ENCODE measurements at regions of chr3 and their contacts with region 1.

Region 1: DNA sequence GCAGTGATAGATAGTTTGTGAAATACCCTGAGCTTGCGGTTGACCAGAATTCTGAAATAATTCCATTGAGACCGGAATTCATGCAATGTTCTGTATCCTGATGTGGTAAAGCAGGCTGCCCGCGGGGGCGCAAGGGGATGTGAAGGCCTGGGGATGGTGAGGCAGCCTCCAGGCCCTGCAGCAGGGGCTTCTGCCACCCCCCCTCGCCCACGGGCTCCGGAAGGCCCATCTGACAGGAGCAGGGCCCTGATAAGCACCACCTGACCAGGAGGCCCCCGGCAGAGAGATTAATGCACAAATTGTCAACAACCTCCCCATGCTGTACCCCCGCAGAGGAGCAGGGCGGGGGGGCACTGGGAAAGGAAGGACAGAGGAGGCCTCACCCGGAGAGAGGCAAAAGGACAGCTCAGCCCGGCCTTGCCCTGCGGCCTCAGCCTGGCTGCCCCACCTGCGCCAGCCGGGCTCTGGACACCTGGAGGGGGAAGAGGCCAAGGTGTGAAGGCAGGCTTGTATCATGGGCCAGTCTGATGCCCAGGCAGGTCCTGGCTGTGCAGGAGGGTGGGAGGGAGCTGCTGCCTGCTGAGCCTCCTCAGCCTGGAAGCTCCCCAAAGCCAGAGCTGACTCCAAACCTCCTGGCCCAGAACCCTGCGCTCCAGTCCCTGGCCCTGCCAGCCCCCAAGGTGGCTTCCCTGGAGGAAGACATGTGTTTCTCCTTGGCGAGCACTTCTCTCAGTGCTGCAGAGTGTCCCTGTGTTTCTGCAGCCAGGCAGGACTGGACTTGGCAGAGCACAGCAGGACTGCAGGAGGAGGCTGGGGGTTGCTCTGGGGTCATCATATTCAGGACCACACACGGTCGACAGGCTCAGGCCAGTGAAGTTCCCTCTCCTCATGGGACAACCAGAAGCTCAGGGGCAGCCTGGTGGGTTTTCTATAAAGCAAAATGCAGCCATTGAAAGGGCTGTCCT is 46.5 kb downstream of the RPN1 start:
- DNase-seq: no peak
- H3K4me3 ChIP-seq: no peak overlapping the region
- H3K27ac ChIP-seq: peak overlapping the region in 1 of 4 donors; percentile 9
- H3K4me1 ChIP-seq: peaks cover 3 to 19% (median 5%) of the 10 kb centered on the region in 3 donors
- H3K27me3 ChIP-seq: no peaks in the 10 kb centered on the region
- CTCF ChIP-seq: no peak
- POLR2A ChIP-seq: no peak

Region 2: DNA sequence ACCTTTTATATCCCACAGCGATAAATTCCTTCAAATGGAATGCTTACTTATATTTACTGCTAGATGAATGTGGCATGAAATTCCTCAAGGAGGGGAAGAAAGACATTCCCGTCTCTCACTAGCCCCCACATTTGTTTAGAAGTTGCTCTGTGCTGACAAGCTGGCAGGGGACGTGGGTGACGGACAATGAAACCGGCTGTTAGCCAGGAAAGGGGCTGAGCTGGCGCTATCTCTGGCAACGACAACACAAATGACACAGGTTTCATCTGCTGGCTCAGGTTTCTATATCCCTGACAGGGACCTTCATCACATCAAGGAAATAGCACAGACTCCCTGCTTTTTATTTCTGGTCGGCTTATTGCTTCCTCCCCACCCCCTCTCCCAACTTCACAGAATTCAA is 496.3 kb before region 1 on chr3:
- intact Hi-C with region 1: loop called (anchors 10 kb)
- DNase-seq: no peak
- H3K4me3 ChIP-seq: no peak overlapping the region
- H3K27ac ChIP-seq: no peak overlapping the region
- H3K4me1 ChIP-seq: peaks cover 0 to 10% (median 0%) of the 10 kb centered on the region in 3 donors
- H3K27me3 ChIP-seq: no peaks in the 10 kb centered on the region
- CTCF ChIP-seq: no peak
- POLR2A ChIP-seq: no peak

Region 3: DNA sequence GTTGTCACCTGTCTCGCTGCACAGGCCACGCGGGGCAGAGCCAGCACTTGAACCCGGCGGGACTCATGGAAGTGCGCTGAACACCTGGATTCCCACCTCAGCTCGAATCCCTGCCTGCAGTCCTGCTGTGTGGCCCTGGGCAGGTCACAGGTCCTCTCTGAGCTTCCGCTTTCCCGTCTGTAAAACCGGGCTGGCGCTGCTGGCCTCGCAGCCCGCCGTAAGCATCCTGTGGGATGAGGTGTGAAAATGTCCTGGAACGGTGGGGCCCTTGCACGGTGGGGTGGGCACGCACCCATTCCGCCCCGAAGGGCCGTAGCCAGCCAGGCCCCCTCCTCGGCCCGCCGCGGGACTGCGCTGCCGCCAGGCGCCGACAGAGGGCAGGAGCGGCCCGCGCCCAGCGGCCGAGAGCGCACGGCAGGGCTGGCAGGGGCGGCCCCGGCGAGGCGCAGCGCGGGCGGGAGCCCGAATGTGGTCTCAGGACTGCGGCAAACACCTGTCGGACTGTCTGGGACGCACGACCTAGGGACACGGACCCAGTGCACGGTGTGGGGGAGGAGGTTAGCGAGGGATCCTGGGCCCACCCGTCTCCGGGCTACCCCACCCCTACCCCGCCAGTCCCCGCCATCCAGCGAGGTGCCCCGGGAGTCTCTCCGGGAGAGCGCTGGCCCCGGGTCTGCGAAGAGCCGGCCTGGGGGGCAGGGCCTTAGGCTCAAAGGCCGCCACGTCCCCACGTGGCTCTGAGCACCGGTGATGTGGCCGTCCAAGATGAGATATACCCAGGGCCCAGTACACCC is 177.8 kb before region 1 on chr3:
- intact Hi-C with region 1: loop called (anchors 10 kb)
- DNase-seq: no peak
- H3K4me3 ChIP-seq: peak overlapping the region in 3 of 4 donors; percentile 21 to 56 (median 28)
- H3K27ac ChIP-seq: no peak overlapping the region
- H3K4me1 ChIP-seq: peaks cover 4 to 10% (median 7%) of the 10 kb centered on the region in 3 donors
- H3K27me3 ChIP-seq: peaks cover 0 to 61% (median 0%) of the 10 kb centered on the region in 4 donors
- CTCF ChIP-seq: peak; percentile 60 to 96 (median 90)
- POLR2A ChIP-seq: no peak

Measured in esophagus squamous epithelium (tissue), 5 donors.